Psoas muscle (tissue), 8 donors: ENCODE measurements at regions of chr14 and their contacts with region 1.

Region 1: DNA sequence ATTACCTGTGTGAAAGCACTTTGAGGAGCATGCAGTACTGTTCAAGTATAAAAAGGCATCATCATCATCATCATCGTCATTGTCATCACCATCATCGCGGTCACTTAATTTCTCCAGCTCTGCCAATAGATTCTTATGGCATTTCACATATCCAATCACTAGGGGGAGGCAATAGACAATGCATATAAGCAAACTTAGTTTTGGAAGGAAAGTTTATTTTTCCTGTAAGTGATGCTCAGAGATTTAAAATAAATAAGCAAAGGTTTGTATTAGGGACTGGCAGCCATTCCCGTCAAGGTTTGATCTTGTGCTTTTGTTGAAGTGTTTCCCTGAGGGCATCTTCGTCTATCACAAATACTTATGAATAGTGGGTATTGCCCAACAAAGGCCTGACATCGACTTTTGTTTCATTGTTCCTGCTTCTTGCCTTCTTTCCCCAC is 127.4 kb downstream of the KTN1 start:
- DNase-seq: no peak
- ATAC-seq: peak; percentile 24 to 69 (median 58)
- H3K4me3 ChIP-seq: no peak overlapping the region
- H3K27ac ChIP-seq: no peak overlapping the region
- H3K4me1 ChIP-seq: peaks cover 12% of the 10 kb centered on the region
- H3K27me3 ChIP-seq: no peaks in the 10 kb centered on the region
- CTCF ChIP-seq: peak; percentile 65

Region 2: GRCh38 chr14:55270832-55271565 is 436.4 kb before region 1 on chr14 and contains the start of gene FBXO34:
- intact Hi-C with region 1: no loop called
- DNase-seq: peak; percentile 99 to 100
- ATAC-seq: peak; percentile 88 to 94 (median 91)
- H3K4me3 ChIP-seq: peak within 1 kb of the TSS; percentile 93
- H3K27ac ChIP-seq: peak within 1 kb of the TSS; percentile 96
- H3K4me1 ChIP-seq: peaks cover 14% of the 10 kb centered on the region
- H3K27me3 ChIP-seq: no peaks in the 10 kb centered on the region
- CTCF ChIP-seq: peak; percentile 99
- total RNA-seq, gene FBXO34: 22.6 to 57.4 (median 31.0) TPM

Region 3: DNA sequence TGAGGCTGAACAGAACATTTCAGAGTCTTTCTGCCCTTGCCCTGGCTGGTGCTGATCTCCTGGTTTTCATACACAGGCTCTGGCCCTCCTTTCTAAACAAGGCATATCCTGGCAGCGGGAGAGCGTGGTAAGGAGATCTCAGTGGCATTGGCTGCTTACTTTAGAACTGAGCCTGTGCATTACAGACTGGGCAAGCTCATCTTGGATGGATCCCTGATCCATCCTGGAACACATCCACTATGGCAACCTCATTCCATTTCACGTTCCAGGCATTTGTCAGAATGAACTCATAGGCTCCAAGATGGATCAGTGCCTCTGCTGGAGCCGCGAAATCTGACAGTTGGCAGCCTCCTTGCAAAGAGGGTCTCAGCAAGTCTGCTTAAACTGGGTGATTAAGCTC is 186.3 kb after region 1 on chr14:
- intact Hi-C with region 1: loop called in 1 of 2 experiments (anchors 5 kb)
- DNase-seq: no peak
- ATAC-seq: peak; percentile 77 to 86 (median 84)
- H3K4me3 ChIP-seq: no peak overlapping the region
- H3K27ac ChIP-seq: peak overlapping the region; percentile 47
- H3K4me1 ChIP-seq: peaks cover 15% of the 10 kb centered on the region
- H3K27me3 ChIP-seq: no peaks in the 10 kb centered on the region
- CTCF ChIP-seq: no peak

Region 4: DNA sequence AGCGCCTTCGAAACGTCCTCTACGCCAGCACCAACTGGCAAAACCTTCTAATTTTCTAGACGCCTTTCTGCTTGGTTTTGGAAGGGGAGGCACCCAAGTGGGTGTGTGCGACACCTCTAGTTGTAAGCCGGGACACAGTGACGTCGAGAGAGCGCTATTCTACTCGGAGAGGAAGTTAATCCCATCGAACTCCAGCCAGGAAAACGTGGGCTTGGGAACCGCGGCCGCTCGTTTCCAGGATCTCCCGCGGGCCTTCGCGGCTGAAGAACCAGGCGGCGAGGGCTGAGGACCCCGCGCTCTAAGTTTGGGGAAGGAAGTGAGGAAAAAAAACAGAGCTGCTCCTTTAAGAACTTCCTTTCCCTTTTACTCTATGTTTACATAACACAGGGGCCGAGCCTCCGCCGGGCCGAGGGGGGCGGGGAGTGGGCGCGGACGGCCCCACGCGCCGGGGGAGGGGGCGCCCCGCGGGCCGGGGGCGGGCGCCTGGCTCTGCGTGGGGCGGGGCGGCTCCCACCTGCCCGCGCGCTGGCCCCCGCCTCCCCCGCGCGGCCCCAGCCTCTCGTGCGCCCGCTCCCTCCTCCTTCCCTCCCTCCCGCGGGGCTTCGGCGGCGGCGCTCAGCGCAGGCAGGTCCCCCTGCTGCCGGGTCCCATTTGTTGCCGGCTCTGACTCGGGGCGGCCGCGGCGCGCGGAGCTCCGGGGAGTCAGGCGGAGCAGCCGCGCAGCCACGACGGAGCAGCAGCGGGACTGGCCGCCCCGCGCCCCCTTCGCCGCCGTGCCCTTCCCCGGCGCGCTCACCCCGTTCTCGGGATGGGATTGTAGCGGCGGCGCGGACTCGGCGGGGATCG is 410.6 kb after region 1 on chr14 and contains the start of gene PELI2:
- intact Hi-C with region 1: loop called in 1 of 2 experiments (anchors 10 kb)
- DNase-seq: peak; percentile 77 to 87
- ATAC-seq: peak; percentile 76 to 85 (median 78)
- H3K4me3 ChIP-seq: peak within 1 kb of the TSS; percentile 89
- H3K27ac ChIP-seq: peak within 1 kb of the TSS; percentile 80
- H3K4me1 ChIP-seq: no peaks in the 10 kb centered on the region
- H3K27me3 ChIP-seq: no peaks in the 10 kb centered on the region
- CTCF ChIP-seq: no peak
- total RNA-seq, gene PELI2: 1.9 to 2.9 (median 2.4) TPM

Region 5: DNA sequence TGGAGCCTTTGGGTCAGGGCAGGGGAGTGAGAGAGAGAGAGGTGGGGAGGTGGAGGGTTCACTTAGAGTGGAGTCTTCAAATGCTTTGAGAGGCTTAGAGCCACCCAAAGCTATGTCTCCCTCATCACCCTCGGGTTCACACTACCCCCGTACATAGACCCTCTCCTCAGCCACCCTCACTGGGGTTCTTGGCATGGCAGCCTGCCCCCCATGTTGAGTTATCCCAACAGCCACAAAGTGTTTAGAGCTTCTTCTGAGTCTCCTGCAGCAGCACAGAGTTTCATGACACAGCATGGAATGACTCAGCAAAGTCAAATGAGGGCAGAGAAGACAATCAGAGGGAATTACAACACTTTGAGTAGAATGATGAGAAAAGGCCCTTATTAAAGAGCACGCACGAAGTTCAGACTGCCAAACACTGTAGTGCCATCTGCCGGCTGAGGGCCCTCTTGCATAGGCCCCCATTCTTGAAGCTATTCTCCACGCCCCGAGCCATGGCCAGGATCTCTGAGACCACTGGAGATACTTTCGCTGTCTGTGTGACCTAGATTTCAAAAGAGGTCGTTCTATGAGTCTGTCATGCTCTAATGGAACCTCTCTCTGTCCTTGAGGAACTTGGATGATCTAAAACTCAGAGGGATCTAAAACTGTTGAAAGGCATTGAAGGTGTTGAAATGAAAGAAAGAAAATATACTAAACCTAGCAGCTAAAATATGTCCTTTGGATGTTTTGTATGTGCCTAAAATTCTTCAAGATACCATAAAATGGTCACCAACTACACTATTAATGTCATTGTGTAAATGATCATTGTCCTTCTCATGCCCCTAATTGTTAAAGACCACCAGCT is 632.7 kb after region 1 on chr14:
- intact Hi-C with region 1: loop called (anchors 5 kb)
- DNase-seq: peak; percentile 73 to 84
- ATAC-seq: peak; percentile 80 to 91 (median 84)
- H3K4me3 ChIP-seq: no peak overlapping the region
- H3K27ac ChIP-seq: no peak overlapping the region
- H3K4me1 ChIP-seq: peaks cover 20% of the 10 kb centered on the region
- H3K27me3 ChIP-seq: no peaks in the 10 kb centered on the region
- CTCF ChIP-seq: peak; percentile 77

Region 6: GRCh38 chr14:56422703-56423213 is 715.4 kb after region 1 on chr14:
- intact Hi-C with region 1: loop called in 1 of 2 experiments (anchors 5 kb)
- DNase-seq: peak; percentile 23 to 57
- ATAC-seq: peak; percentile 65 to 86 (median 74)
- H3K4me3 ChIP-seq: no peak overlapping the region
- H3K27ac ChIP-seq: no peak overlapping the region
- H3K4me1 ChIP-seq: peaks cover 3% of the 10 kb centered on the region
- H3K27me3 ChIP-seq: no peaks in the 10 kb centered on the region
- CTCF ChIP-seq: peak; percentile 60

Region 7: DNA sequence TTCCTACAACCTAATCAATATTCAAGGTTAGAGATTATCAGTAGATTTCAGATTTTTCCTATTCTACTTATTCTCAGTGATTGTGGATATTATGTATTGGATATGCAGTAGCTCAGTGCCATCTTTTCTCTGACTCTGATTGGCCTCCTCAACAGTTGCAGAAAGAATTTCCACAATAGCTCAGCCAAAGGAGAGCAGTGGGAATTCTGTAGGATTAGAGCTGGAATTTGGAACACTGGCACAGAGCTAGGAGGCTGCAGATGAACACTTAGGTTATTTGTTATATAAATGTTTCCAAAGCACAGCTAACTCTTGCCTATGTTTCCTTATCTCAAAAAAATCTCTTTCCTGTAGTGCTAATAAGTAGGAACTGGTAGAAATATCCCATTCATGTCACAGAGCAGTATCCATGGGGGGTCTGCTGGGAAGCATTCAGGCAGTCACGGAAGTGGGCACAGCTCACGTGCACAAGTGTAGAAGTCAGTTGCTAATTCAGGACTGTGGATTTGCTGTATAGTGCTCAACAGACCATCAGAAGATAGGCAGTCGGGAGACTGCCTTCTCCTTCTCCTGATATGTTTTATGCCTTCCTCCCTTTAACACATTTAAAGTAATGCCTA is 756.0 kb after region 1 on chr14:
- intact Hi-C with region 1: loop called in 1 of 2 experiments (anchors 10 kb)
- DNase-seq: no peak
- ATAC-seq: no peak
- H3K4me3 ChIP-seq: no peak overlapping the region
- H3K27ac ChIP-seq: no peak overlapping the region
- H3K4me1 ChIP-seq: no peaks in the 10 kb centered on the region
- H3K27me3 ChIP-seq: no peaks in the 10 kb centered on the region
- CTCF ChIP-seq: no peak

Region 8: GRCh38 chr14:56474419-56475022 is 767.1 kb after region 1 on chr14:
- intact Hi-C with region 1: loop called (anchors 2 to 10 kb)
- DNase-seq: no peak
- ATAC-seq: peak in 1 of 4 donors; percentile 62
- H3K4me3 ChIP-seq: no peak overlapping the region
- H3K27ac ChIP-seq: no peak overlapping the region
- H3K4me1 ChIP-seq: no peaks in the 10 kb centered on the region
- H3K27me3 ChIP-seq: peaks cover 0 to 2% (median 0%) of the 10 kb centered on the region in 3 donors
- CTCF ChIP-seq: peak; percentile 83